MCF 10A (cell line): ENCODE measurements at regions of chr19 and their contacts with region 1.

Region 1: GRCh38 chr19:38964738-38965137 is 10.8 kb downstream of the FBXO17 start:
- DNase-seq: no peak
- H3K4me3 Mint-ChIP-seq: no peak overlapping the region
- H3K27ac Mint-ChIP-seq: no peak overlapping the region
- H3K4me1 Mint-ChIP-seq: peaks cover 5% of the 10 kb centered on the region
- H3K27me3 Mint-ChIP-seq: no peaks in the 10 kb centered on the region
- CTCF ChIP-seq: no peak

Region 2: GRCh38 chr19:38831142-38831605 is 133.6 kb before region 1 on chr19:
- CTCF ChIA-PET with region 1: no interaction called
- POLR2A ChIA-PET with region 1: no interaction called
- intact Hi-C with region 1: no loop called
- DNase-seq: peak; percentile 73
- H3K4me3 Mint-ChIP-seq: peak overlapping the region; percentile 77
- H3K27ac Mint-ChIP-seq: peak overlapping the region; percentile 82
- H3K4me1 Mint-ChIP-seq: peaks cover 17% of the 10 kb centered on the region
- H3K27me3 Mint-ChIP-seq: no peaks in the 10 kb centered on the region
- CTCF ChIP-seq: no peak

Region 3: DNA sequence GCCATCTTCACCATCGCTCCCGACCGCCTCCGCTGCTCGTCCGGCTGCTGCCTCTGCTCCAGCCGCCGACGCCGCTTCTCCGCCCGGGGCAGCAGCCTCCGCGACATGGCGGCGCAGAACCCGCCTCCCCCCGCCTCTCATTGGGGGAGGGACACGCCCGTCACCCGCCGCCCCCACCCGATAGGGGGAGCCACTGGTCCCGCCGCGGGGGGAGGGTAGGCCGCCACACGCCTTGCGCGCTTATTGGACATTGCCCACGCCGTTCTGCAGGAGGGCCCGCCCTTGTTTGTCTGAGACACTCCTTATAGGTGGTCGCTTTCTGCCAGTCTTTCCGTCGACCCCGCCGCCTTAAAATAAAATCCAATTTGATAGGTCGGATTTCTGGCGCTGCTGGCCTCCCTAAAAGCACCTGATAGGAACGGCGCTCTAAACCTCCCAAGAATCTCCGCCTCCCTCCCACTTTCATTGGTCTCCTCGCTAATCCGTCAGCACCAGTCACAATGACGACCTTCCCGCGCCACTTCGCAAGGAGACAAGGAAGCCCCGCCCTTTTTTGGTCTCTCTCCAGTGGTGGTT is 114.8 kb before region 1 on chr19 and contains the start of gene HNRNPL:
- CTCF ChIA-PET with region 1: no interaction called
- POLR2A ChIA-PET with region 1: no interaction called
- intact Hi-C with region 1: no loop called
- DNase-seq: peak; percentile 100
- H3K4me3 Mint-ChIP-seq: peak within 1 kb of the TSS; percentile 97
- H3K27ac Mint-ChIP-seq: peak within 1 kb of the TSS; percentile 99
- H3K4me1 Mint-ChIP-seq: peaks cover 18% of the 10 kb centered on the region
- H3K27me3 Mint-ChIP-seq: no peaks in the 10 kb centered on the region
- CTCF ChIP-seq: no peak
- total RNA-seq, gene HNRNPL: 288 and 421 TPM in 2 replicates

Region 4: GRCh38 chr19:38949580-38950367 is 15.0 kb before region 1 on chr19:
- CTCF ChIA-PET with region 1: interaction called, 17 read pairs
- POLR2A ChIA-PET with region 1: interaction called, 4 read pairs
- intact Hi-C with region 1: no loop called
- DNase-seq: no peak
- H3K4me3 Mint-ChIP-seq: no peak overlapping the region
- H3K27ac Mint-ChIP-seq: no peak overlapping the region
- H3K4me1 Mint-ChIP-seq: peaks cover 5% of the 10 kb centered on the region
- H3K27me3 Mint-ChIP-seq: no peaks in the 10 kb centered on the region
- CTCF ChIP-seq: no peak

Region 5: GRCh38 chr19:39038098-39038497 is 73.4 kb after region 1 on chr19:
- CTCF ChIA-PET with region 1: interaction called, 7 read pairs
- POLR2A ChIA-PET with region 1: no interaction called
- intact Hi-C with region 1: loop called (anchors 1 kb)
- DNase-seq: peak; percentile 68
- H3K4me3 Mint-ChIP-seq: no peak overlapping the region
- H3K27ac Mint-ChIP-seq: no peak overlapping the region
- H3K4me1 Mint-ChIP-seq: no peaks in the 10 kb centered on the region
- H3K27me3 Mint-ChIP-seq: no peaks in the 10 kb centered on the region
- CTCF ChIP-seq: peak; percentile 5